Naive thymus-derived CD4-positive, alpha-beta T cell (primary cell): ENCODE measurements at regions of chr1 and their contacts with region 1.

Region 1: GRCh38 chr1:41573785-41574713 is 89.6 kb upstream of the EDN2 start:
- DNase-seq: peak; percentile 60 to 84 (median 76)
- ATAC-seq: peak; percentile 97
- H3K4me3 ChIP-seq: no peak overlapping the region
- H3K4me3 Mint-ChIP-seq: no peak overlapping the region
- H3K27ac ChIP-seq: no peak overlapping the region
- H3K27ac Mint-ChIP-seq: no peak overlapping the region
- H3K4me1 ChIP-seq: peaks cover 4 to 9% of the 10 kb centered on the region in 2 donors
- H3K4me1 Mint-ChIP-seq: peaks cover 0 to 32% (median 8%) of the 10 kb centered on the region in 7 donors
- H3K27me3 ChIP-seq: no peaks in the 10 kb centered on the region
- H3K27me3 Mint-ChIP-seq: no peaks in the 10 kb centered on the region

Region 2: DNA sequence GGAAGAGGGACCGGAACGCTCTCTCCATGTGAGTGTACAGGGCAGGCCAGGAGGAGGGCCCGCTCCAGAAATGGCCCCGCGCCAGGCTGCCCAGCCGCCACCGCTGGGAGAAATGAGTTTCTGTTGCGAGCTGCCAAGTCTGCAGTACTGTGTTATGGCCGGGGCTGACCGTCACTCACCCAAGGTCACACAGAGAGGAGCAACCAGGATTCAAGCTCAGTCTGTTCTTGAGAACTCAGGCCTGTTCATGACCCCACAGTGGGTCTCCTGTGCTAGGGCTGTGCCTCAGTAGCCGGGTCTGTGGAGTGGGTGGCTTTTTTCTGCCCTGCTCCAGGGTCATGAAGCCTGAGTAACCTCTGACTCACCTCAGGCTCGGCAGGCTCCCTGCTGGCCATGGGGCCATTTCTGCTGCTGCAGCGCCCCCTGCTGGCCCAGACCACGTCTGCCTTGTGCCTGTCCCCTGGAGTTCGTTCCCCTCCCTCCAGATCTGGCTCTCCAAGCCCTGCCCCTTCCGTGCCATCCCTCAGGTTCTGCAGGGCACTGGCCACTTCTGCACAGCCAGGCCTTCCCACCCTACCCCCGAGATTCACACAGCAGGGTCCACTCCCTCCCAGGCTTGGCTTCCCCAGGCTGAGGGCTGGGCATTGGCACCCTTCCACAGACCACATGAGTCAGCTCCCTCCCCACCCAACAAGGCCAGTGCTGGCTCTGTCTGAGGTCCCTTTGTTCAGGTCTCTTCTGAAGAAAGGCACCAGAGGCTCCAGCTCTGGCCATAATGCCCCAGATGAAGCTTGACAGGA is 141.4 kb before region 1 on chr1:
- CTCF ChIA-PET with region 1: no interaction called
- POLR2A ChIA-PET with region 1: no interaction called
- intact Hi-C with region 1: no loop called
- DNase-seq: peak; percentile 21 to 80 (median 52)
- ATAC-seq: peak; percentile 89
- H3K4me3 ChIP-seq: no peak overlapping the region
- H3K4me3 Mint-ChIP-seq: no peak overlapping the region
- H3K27ac ChIP-seq: no peak overlapping the region
- H3K27ac Mint-ChIP-seq: no peak overlapping the region
- H3K4me1 ChIP-seq: no peaks in the 10 kb centered on the region
- H3K4me1 Mint-ChIP-seq: peaks cover 0 to 8% (median 0%) of the 10 kb centered on the region in 7 donors
- H3K27me3 ChIP-seq: no peaks in the 10 kb centered on the region
- H3K27me3 Mint-ChIP-seq: peaks cover 14 to 41% (median 37%) of the 10 kb centered on the region in 5 donors

Region 3: DNA sequence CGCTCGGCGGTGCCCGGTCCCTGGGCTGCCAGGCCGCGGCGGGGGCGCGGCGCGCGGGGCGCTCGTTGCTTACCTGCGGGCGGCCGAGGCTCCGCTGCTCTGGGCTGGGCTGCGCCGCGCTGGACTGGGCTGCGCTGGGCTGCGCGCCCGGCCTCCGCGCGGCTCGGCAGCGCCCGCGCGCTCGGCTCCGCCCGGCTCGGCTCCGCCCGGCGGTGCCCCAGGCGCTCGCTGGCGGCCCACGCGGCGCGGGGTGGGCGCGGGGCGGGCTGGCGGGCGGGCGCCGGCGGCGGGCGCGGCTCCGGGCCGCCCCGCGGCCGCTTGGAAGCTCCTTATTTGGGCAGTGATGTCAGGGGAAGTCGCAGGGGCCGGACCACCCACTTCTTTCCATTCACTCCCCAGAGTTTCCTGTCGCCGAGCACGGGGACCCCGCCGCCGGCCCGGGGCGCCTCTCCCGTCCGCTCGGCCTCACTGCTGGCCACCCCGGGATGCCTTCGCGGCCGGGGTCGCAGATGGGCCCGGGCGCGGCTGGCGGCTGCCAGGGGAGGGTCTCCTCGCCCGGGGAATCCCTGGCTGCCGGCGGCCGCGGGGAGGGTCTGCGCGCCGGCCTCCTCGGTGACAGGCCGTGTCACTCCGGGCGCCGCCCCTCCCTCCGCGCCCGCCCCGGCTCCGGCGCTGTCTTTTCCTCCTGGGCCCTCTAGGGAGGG is 88.2 kb after region 1 on chr1:
- CTCF ChIA-PET with region 1: no interaction called
- POLR2A ChIA-PET with region 1: no interaction called
- intact Hi-C with region 1: loop called (anchors 1 to 10 kb)
- DNase-seq: peak; percentile 47 to 82 (median 60)
- ATAC-seq: peak; percentile 88
- H3K4me3 ChIP-seq: peak overlapping the region; percentile 60
- H3K4me3 Mint-ChIP-seq: peak overlapping the region in 6 of 10 donors; percentile 13 to 93 (median 70)
- H3K27ac ChIP-seq: peak overlapping the region; percentile 61
- H3K27ac Mint-ChIP-seq: peak overlapping the region in 2 of 9 donors; percentile 56 to 84
- H3K4me1 ChIP-seq: peaks cover 25 to 51% of the 10 kb centered on the region in 2 donors
- H3K4me1 Mint-ChIP-seq: peaks cover 42 to 80% (median 66%) of the 10 kb centered on the region in 7 donors
- H3K27me3 ChIP-seq: no peaks in the 10 kb centered on the region
- H3K27me3 Mint-ChIP-seq: no peaks in the 10 kb centered on the region

Region 4: DNA sequence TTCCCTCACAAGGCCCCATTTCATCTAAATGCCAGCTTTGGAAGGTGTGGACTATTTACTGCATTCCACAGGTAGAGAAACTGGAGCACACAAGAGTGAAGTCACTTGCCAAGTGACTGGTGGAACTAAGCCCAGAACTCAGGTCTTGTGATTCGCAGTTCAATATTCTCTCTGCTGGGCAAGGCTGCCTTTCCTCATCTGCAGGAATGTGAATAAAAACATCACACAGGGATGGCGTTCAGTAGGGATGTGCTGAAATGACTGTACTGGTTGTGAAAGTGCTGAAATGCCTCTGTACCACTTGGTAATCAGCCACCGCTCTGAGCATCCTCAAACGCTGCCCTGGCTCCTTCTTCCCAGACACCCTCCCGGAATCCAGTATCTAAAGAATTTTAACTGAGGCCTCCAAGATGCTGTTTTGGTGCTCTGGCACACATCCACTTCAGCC is 199.1 kb after region 1 on chr1:
- CTCF ChIA-PET with region 1: no interaction called
- POLR2A ChIA-PET with region 1: no interaction called
- intact Hi-C with region 1: no loop called
- DNase-seq: no peak
- ATAC-seq: no peak
- H3K4me3 ChIP-seq: no peak overlapping the region
- H3K4me3 Mint-ChIP-seq: no peak overlapping the region
- H3K27ac ChIP-seq: no peak overlapping the region
- H3K27ac Mint-ChIP-seq: no peak overlapping the region
- H3K4me1 ChIP-seq: no peaks in the 10 kb centered on the region
- H3K4me1 Mint-ChIP-seq: peaks cover 0 to 11% (median 0%) of the 10 kb centered on the region in 7 donors
- H3K27me3 ChIP-seq: no peaks in the 10 kb centered on the region
- H3K27me3 Mint-ChIP-seq: no peaks in the 10 kb centered on the region

Region 5: GRCh38 chr1:41802532-41803501 is 228.8 kb after region 1 on chr1:
- CTCF ChIA-PET with region 1: no interaction called
- POLR2A ChIA-PET with region 1: no interaction called
- intact Hi-C with region 1: loop called (anchors 2 to 5 kb)
- DNase-seq: peak in 7 of 9 donors; percentile 26 to 51 (median 48)
- ATAC-seq: peak; percentile 85
- H3K4me3 ChIP-seq: peak overlapping the region; percentile 32
- H3K4me3 Mint-ChIP-seq: peak overlapping the region; percentile 6 to 77 (median 62)
- H3K27ac ChIP-seq: peak overlapping the region; percentile 7
- H3K27ac Mint-ChIP-seq: peak overlapping the region; percentile 54 to 92 (median 87)
- H3K4me1 ChIP-seq: peaks cover 50 to 82% of the 10 kb centered on the region in 2 donors
- H3K4me1 Mint-ChIP-seq: peaks cover 59 to 84% (median 73%) of the 10 kb centered on the region in 7 donors
- H3K27me3 ChIP-seq: no peaks in the 10 kb centered on the region
- H3K27me3 Mint-ChIP-seq: no peaks in the 10 kb centered on the region

Region 6: DNA sequence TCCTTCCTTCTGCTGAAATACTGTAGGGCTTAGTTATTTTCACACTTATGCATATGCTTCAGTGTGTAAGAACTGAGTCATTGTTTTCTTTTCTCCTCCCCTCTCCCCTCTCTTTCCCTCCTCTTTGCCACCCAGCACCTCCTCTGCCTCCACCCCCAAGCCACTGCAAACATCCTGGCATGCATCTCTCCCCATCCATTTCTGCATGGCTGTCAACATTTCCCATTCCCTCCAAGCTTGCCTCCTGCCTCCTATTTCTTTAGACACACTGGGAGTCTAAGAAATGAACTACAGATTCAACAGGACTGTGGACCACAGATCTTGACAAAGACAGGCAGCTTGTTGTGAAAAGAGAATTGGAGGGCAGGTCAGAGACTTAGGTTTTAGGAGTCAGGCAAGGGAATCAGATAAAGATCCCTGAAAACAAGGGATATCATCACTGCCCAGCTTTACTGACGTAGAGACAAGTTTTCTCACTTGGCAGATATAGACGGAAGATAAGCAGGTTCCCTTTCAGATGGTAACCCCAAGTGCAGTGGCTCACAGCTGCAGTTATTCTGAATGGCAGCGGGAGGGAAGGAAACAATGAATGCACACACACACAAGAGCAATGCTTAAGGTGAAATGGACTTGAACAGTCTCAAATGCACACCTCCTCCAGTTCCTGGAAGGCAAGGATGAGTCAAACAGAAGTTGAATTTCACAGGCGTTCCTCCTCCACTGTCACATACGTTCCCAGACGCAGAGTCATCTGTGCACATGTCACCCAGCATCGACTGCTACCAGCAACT is 288.5 kb after region 1 on chr1:
- CTCF ChIA-PET with region 1: no interaction called
- POLR2A ChIA-PET with region 1: no interaction called
- intact Hi-C with region 1: loop called in 1 of 2 experiments (anchors 1 kb)
- DNase-seq: peak in 1 of 9 donors; percentile 57
- ATAC-seq: peak; percentile 53
- H3K4me3 ChIP-seq: no peak overlapping the region
- H3K4me3 Mint-ChIP-seq: peak overlapping the region in 1 of 10 donors; percentile 41
- H3K27ac ChIP-seq: no peak overlapping the region
- H3K27ac Mint-ChIP-seq: peak overlapping the region in 2 of 9 donors; percentile 41 to 58
- H3K4me1 ChIP-seq: peaks cover 0 to 4% of the 10 kb centered on the region in 2 donors
- H3K4me1 Mint-ChIP-seq: peaks cover 0 to 26% (median 15%) of the 10 kb centered on the region in 7 donors
- H3K27me3 ChIP-seq: no peaks in the 10 kb centered on the region
- H3K27me3 Mint-ChIP-seq: no peaks in the 10 kb centered on the region

Region 7: GRCh38 chr1:41891199-41891896 is 317.3 kb after region 1 on chr1:
- CTCF ChIA-PET with region 1: interaction called, 12 read pairs
- POLR2A ChIA-PET with region 1: no interaction called
- intact Hi-C with region 1: loop called (anchors 1 kb)
- DNase-seq: peak; percentile 37 to 80 (median 75)
- ATAC-seq: peak; percentile 94
- H3K4me3 ChIP-seq: peak overlapping the region; percentile 60
- H3K4me3 Mint-ChIP-seq: peak overlapping the region; percentile 77 to 93 (median 84)
- H3K27ac ChIP-seq: peak overlapping the region; percentile 68
- H3K27ac Mint-ChIP-seq: peak overlapping the region; percentile 84 to 94 (median 92)
- H3K4me1 ChIP-seq: peaks cover 17 to 45% of the 10 kb centered on the region in 2 donors
- H3K4me1 Mint-ChIP-seq: peaks cover 23 to 64% (median 36%) of the 10 kb centered on the region in 7 donors
- H3K27me3 ChIP-seq: no peaks in the 10 kb centered on the region
- H3K27me3 Mint-ChIP-seq: peaks cover 0 to 2% (median 0%) of the 10 kb centered on the region in 5 donors

Region 8: DNA sequence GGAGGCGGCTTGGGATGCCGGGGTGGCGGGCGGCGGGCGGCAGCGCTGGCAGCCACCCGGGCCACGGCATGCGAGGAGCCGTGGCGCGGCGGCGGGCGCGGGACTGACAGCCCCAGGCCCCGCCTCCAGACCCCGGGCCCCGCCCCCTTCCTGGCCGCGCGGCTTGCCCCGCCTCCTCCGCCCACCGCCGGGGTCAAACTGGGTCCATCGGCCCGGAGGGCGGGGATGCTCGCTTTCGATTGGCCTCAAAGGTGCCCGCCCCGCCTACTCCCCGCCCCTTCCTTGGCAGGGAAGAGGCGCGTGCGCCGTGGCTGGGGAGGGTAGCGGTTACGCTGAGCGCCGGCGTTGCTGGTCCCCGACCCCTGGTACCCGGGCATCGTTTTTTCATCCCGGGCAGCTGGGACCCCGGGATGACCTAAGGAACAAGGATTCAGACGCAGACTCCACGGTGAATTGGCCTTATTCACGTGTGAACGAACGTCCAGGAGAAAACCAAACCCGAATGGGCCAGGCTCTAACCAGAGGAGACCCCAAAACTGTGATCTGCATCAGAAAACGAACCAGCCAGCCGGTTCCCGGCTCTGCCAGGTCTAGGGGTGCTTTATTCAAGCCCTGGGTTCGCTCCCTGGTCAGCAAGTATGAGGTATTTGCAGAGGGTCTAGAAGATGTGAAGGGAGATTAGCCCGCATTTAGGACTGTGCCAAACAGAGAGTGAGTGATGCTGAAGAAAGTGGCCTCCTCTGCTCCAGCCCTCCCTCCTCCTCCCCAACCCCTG is 462.0 kb after region 1 on chr1:
- CTCF ChIA-PET with region 1: interaction called, 3 read pairs
- POLR2A ChIA-PET with region 1: no interaction called
- intact Hi-C with region 1: loop called (anchors 1 to 2 kb)
- DNase-seq: peak; percentile 92 to 100 (median 96)
- ATAC-seq: peak; percentile 98
- H3K4me3 ChIP-seq: peak overlapping the region; percentile 72
- H3K4me3 Mint-ChIP-seq: peak overlapping the region in 9 of 10 donors; percentile 74 to 88 (median 84)
- H3K27ac ChIP-seq: peak overlapping the region; percentile 74
- H3K27ac Mint-ChIP-seq: peak overlapping the region in 5 of 9 donors; percentile 37 to 82 (median 65)
- H3K4me1 ChIP-seq: peaks cover 25 to 43% of the 10 kb centered on the region in 2 donors
- H3K4me1 Mint-ChIP-seq: peaks cover 23 to 45% (median 39%) of the 10 kb centered on the region in 7 donors
- H3K27me3 ChIP-seq: no peaks in the 10 kb centered on the region
- H3K27me3 Mint-ChIP-seq: peaks cover 0 to 20% (median 0%) of the 10 kb centered on the region in 5 donors

Region 9: GRCh38 chr1:42173155-42173933 is 599.3 kb after region 1 on chr1:
- CTCF ChIA-PET with region 1: interaction called, 56 read pairs
- POLR2A ChIA-PET with region 1: no interaction called
- intact Hi-C with region 1: loop called (anchors 1 kb)
- DNase-seq: peak; percentile 28 to 76 (median 57)
- ATAC-seq: peak; percentile 85
- H3K4me3 ChIP-seq: no peak overlapping the region
- H3K4me3 Mint-ChIP-seq: no peak overlapping the region
- H3K27ac ChIP-seq: no peak overlapping the region
- H3K27ac Mint-ChIP-seq: peak overlapping the region in 2 of 9 donors; percentile 17 to 71
- H3K4me1 ChIP-seq: no peaks in the 10 kb centered on the region
- H3K4me1 Mint-ChIP-seq: peaks cover 0 to 3% (median 0%) of the 10 kb centered on the region in 7 donors
- H3K27me3 ChIP-seq: no peaks in the 10 kb centered on the region
- H3K27me3 Mint-ChIP-seq: no peaks in the 10 kb centered on the region

Region 10: GRCh38 chr1:42392967-42393848 is 819.2 kb after region 1 on chr1:
- CTCF ChIA-PET with region 1: no interaction called
- POLR2A ChIA-PET with region 1: no interaction called
- intact Hi-C with region 1: no loop called
- DNase-seq: no peak
- ATAC-seq: no peak
- H3K4me3 ChIP-seq: no peak overlapping the region
- H3K4me3 Mint-ChIP-seq: no peak overlapping the region
- H3K27ac ChIP-seq: no peak overlapping the region
- H3K27ac Mint-ChIP-seq: no peak overlapping the region
- H3K4me1 ChIP-seq: no peaks in the 10 kb centered on the region
- H3K4me1 Mint-ChIP-seq: peaks cover 0 to 6% (median 0%) of the 10 kb centered on the region in 7 donors
- H3K27me3 ChIP-seq: no peaks in the 10 kb centered on the region
- H3K27me3 Mint-ChIP-seq: peaks cover 0 to 3% (median 0%) of the 10 kb centered on the region in 5 donors